ENCODE measurements at regions of chr9 and their contacts with region 1.

Region 1: GRCh38 chr9:129237195-129237611 is 59.1 kb upstream of the IER5L start:
- DNase-seq: peak; percentile 37 to 41
- ATAC-seq: peak; percentile 72 to 84
- H3K4me3 ChIP-seq: no peak overlapping the region
- H3K27ac ChIP-seq: peak overlapping the region; percentile 57 to 87
- H3K4me1 ChIP-seq: peaks cover 17% of the 10 kb centered on the region
- CTCF ChIP-seq: no peak
- EP300 ChIP-seq: no peak
- POLR2A ChIP-seq: no peak
- RAD21 ChIP-seq: no peak

Region 2: DNA sequence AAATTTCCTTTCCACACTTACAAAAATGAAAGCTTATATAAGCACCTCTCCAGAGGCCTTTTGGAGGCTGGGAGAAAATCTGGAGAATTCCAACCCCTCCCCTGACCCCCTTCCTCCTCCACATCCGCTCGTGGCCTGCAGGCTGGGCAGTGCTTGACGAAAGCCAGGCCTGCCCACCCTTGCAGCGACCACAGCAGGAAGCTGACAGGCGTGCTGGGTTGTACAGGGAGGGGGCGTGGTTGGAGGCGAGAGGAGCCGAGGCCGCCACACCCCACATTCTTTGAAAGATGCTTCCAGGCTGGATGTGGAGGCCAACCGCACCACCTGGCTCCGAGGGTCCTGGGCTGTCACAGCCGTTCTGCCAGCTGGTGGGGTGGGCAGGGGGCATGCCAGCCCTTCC is 11.4 kb before region 1 on chr9:
- CTCF ChIA-PET with region 1: interaction called, 6 read pairs
- POLR2A ChIA-PET with region 1: interaction called, 13 read pairs
- DNase-seq: peak; percentile 49 to 77
- ATAC-seq: peak; percentile 56 to 81; a peak in 4 of 6 replicates
- H3K4me3 ChIP-seq: no peak overlapping the region
- H3K27ac ChIP-seq: peak overlapping the region; percentile 54 to 74
- H3K4me1 ChIP-seq: peaks cover 28% of the 10 kb centered on the region
- CTCF ChIP-seq: no peak
- EP300 ChIP-seq: no peak
- POLR2A ChIP-seq: no peak
- RAD21 ChIP-seq: no peak

Measured in A549 (cell line).